Panc1 (cell line): ENCODE measurements at regions of chr5 and their contacts with region 1.

Region 1: DNA sequence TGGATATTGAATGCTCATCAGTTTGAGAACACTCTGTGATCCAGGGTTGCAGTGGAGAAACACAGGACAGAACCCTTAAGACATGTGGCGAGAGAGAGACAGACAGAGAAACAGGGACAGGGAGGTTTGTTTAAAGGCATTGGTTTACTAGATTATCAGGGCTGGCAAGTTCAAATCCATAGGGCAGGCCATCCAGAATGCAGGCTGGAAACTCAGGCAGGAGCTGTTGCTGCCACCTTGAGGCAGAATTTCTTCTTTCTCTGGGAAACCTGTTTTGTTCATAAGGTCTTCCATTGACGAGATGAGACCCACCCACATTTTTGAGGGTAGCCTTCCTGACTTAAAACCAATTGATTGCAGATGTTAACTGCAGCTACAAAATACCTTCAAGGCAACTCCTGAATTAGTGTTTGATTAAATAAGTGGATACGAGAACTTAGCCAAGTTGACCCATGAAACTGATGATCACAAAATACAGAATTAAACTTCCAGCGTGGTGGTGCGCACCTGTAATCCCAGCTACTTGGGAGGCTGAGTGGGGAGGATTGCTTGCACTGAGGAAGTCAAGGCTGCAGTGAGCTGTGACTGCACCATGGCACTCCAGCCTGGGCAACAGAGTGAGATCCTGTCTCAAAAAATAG is 55.9 kb downstream of the NSUN2 start:
- DNase-seq: peak; percentile 46
- ATAC-seq: peak; percentile 67
- H3K4me3 ChIP-seq: no peak overlapping the region
- H3K27ac ChIP-seq: no peak overlapping the region
- H3K4me1 ChIP-seq: no peaks in the 10 kb centered on the region; the same call in 1 of the 2 replicates
- H3K27me3 ChIP-seq: peaks cover 14% of the 10 kb centered on the region
- CTCF ChIP-seq: peak; percentile 86

Region 2: DNA sequence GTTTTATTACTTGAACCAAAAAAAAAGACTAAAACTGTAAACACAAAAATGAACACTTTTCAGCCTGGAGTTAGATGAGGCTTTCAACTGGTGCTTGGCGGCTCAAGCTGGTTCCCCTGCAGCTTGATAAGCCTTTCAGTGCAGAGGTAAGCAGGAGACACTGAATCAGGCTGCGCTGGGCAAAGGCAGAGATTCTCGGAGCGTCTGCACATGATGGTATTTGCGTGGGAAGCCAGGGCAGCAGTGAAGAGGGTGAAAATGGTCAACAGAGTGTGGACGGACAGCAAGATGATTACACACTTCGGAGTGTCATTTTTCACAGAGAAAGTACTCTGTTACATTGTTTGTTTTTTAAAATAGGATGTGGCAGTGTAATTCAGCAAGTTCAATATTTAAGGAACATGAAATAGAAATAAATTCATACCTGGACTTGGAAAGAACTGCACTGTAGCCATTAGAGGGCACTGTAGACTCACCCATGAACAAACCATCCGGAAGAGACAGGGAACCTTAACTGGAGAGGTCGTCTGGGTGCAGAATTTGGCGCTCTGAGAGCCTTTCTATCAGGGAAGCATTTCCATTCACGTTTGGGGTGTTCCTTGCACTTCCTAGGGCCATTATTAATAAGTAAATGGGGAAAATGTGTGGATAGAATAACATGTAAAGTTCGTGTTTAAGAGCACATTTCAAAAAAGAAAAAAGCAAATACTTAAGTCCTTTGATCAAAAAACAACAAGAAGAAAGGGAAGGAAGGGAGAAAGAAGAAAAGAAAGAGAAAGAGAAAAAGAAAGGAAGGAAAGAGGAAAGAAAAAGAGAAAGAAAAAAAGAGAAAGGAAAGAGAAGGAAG is 1084.7 kb before region 1 on chr5:
- CTCF ChIA-PET with region 1: interaction called, 3 read pairs
- POLR2A ChIA-PET with region 1: no interaction called
- in situ Hi-C with region 1: no loop called
- intact Hi-C with region 1: loop called (anchors 5 kb)
- DNase-seq: peak; percentile 41
- ATAC-seq: peak; percentile 72; the same call in 1 of the 2 replicates
- H3K4me3 ChIP-seq: no peak overlapping the region
- H3K27ac ChIP-seq: no peak overlapping the region
- H3K4me1 ChIP-seq: no peaks in the 10 kb centered on the region
- H3K27me3 ChIP-seq: peaks cover 5% of the 10 kb centered on the region
- CTCF ChIP-seq: peak; percentile 89

Region 3: DNA sequence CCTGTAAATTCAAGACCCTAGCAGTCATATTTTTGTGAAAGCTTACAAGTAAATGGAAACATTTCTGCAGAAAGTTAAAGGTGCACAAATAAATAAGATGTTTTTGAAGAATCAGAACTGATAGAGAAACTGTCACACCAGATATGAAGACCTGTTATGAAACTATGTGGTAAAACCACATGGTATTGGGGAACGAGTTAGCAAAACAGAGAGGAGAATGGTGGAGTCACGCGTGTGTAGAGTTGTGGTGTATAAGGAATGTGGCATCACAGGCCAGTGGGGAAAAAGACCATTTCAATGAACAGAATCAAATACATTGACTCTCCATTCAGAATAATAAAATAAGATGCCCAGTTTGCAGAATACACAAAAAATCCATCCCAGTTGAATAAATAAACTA is 677.3 kb before region 1 on chr5:
- CTCF ChIA-PET with region 1: no interaction called
- POLR2A ChIA-PET with region 1: no interaction called
- in situ Hi-C with region 1: no loop called
- intact Hi-C with region 1: loop called (anchors 10 kb)
- DNase-seq: no peak
- ATAC-seq: no peak
- H3K4me3 ChIP-seq: no peak overlapping the region
- H3K27ac ChIP-seq: no peak overlapping the region
- H3K4me1 ChIP-seq: no peaks in the 10 kb centered on the region
- H3K27me3 ChIP-seq: no peaks in the 10 kb centered on the region
- CTCF ChIP-seq: no peak

Region 4: GRCh38 chr5:6291961-6292360 is 285.0 kb before region 1 on chr5:
- CTCF ChIA-PET with region 1: interaction called, 3 read pairs
- POLR2A ChIA-PET with region 1: no interaction called
- in situ Hi-C with region 1: no loop called
- intact Hi-C with region 1: loop called (anchors 2 kb)
- DNase-seq: peak; percentile 7
- ATAC-seq: peak; percentile 63; the same call in 1 of the 2 replicates
- H3K4me3 ChIP-seq: no peak overlapping the region
- H3K27ac ChIP-seq: no peak overlapping the region
- H3K4me1 ChIP-seq: no peaks in the 10 kb centered on the region
- H3K27me3 ChIP-seq: peaks cover 9% of the 10 kb centered on the region; the same call in 1 of the 2 replicates
- CTCF ChIP-seq: peak; percentile 62

Region 5: GRCh38 chr5:6377905-6378765 is 198.8 kb before region 1 on chr5 and contains the start of gene MED10:
- CTCF ChIA-PET with region 1: no interaction called
- POLR2A ChIA-PET with region 1: no interaction called
- in situ Hi-C with region 1: no loop called
- intact Hi-C with region 1: loop called (anchors 10 kb)
- DNase-seq: peak; percentile 71
- ATAC-seq: peak; percentile 100
- H3K4me3 ChIP-seq: peak within 1 kb of the TSS; percentile 100
- H3K27ac ChIP-seq: peak within 1 kb of the TSS; percentile 96
- H3K4me1 ChIP-seq: peaks cover 10% of the 10 kb centered on the region
- H3K27me3 ChIP-seq: no peaks in the 10 kb centered on the region
- CTCF ChIP-seq: no peak
- total RNA-seq, gene MED10: 34.0 TPM